ENCODE measurements at regions of chr12 and their contacts with region 1.

Region 1: DNA sequence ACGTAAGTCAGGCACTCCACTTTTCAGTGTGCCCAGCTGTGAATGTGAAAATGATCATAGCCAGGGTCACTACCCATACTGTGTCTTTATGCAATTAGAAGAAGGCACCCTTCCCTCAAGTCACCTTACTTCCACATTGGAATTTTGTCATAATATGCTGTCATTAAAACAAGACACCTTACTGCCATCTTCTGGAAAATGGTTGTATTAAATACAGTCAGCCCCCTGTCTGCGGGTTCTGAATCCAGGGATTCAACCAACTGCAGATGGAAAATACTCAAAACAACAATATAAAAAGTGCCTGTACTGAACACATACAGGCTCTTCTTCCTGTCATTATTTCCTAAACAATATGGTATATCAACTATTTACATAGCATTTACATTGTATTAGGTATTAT is 70.2 kb upstream of the TBX5 start:
- DNase-seq: no peak
- ATAC-seq: peak; percentile 34 to 54
- H3K4me3 ChIP-seq: no peak overlapping the region
- H3K27ac ChIP-seq: no peak overlapping the region
- H3K4me1 ChIP-seq: peaks cover 3% of the 10 kb centered on the region
- H3K27me3 ChIP-seq: no peaks in the 10 kb centered on the region

Region 2: GRCh38 chr12:114063435-114063834 is 412.7 kb before region 1 on chr12:
- intact Hi-C with region 1: no loop called
- DNase-seq: no peak
- ATAC-seq: no peak
- H3K4me3 ChIP-seq: no peak overlapping the region
- H3K27ac ChIP-seq: no peak overlapping the region
- H3K4me1 ChIP-seq: no peaks in the 10 kb centered on the region
- H3K27me3 ChIP-seq: no peaks in the 10 kb centered on the region

Region 3: GRCh38 chr12:114245555-114245954 is 230.6 kb before region 1 on chr12:
- intact Hi-C with region 1: loop called in 1 of 4 experiments (anchors 10 kb)
- DNase-seq: no peak
- ATAC-seq: peak in 1 of 2 donors; percentile 78
- H3K4me3 ChIP-seq: no peak overlapping the region
- H3K27ac ChIP-seq: no peak overlapping the region
- H3K4me1 ChIP-seq: peaks cover 3% of the 10 kb centered on the region
- H3K27me3 ChIP-seq: no peaks in the 10 kb centered on the region

Region 4: GRCh38 chr12:114403011-114403689 is 73.0 kb before region 1 on chr12:
- intact Hi-C with region 1: loop called in 1 of 4 experiments (anchors 5 kb)
- DNase-seq: peak; percentile 36 to 77 (median 71)
- ATAC-seq: peak; percentile 14 to 32
- H3K4me3 ChIP-seq: peak overlapping the region; percentile 83
- H3K27ac ChIP-seq: peak overlapping the region; percentile 82
- H3K4me1 ChIP-seq: no peaks in the 10 kb centered on the region
- H3K27me3 ChIP-seq: no peaks in the 10 kb centered on the region